CD8-positive, alpha-beta memory T cell (primary cell): ENCODE measurements at regions of chr6 and their contacts with region 1.

Region 1: GRCh38 chr6:120055071-120055470 is 705.5 kb upstream of the MAN1A1 start:
- DNase-seq: no peak
- H3K4me3 ChIP-seq: no peak overlapping the region
- H3K4me3 Mint-ChIP-seq: no peak overlapping the region
- H3K27ac ChIP-seq: no peak overlapping the region
- H3K27ac Mint-ChIP-seq: no peak overlapping the region
- H3K4me1 ChIP-seq: no peaks in the 10 kb centered on the region
- H3K4me1 Mint-ChIP-seq: no peaks in the 10 kb centered on the region
- H3K27me3 ChIP-seq: no peaks in the 10 kb centered on the region
- H3K27me3 Mint-ChIP-seq: peaks cover 0 to 3% of the 10 kb centered on the region in 2 donors

Region 2: DNA sequence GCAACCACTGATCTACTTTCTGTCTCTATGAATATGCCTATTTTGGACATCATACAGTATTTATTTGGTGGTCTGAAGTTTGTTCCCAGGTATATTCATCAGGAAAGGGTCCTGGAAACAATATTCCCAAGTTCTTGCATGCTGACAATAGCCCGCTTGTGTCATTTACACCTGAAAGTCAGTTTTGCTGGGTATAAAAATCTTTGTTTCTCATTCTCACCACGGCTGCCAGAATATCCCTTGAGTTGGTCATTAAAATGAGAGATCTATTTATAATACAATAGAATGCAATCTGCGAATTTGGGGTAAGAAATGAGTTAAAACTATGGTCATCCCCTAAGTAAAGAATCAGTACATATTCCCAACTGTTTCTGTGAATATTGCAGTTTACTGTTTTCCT is 784.5 kb before region 1 on chr6:
- CTCF ChIA-PET with region 1: no interaction called
- POLR2A ChIA-PET with region 1: interaction called, 10 read pairs
- DNase-seq: no peak
- H3K4me3 ChIP-seq: no peak overlapping the region
- H3K4me3 Mint-ChIP-seq: peak overlapping the region in 1 of 7 donors; percentile 14
- H3K27ac ChIP-seq: no peak overlapping the region
- H3K27ac Mint-ChIP-seq: peak overlapping the region in 1 of 8 donors; percentile 21
- H3K4me1 ChIP-seq: peaks cover 13% of the 10 kb centered on the region
- H3K4me1 Mint-ChIP-seq: peaks cover 27 to 37% (median 32%) of the 10 kb centered on the region in 3 donors
- H3K27me3 ChIP-seq: no peaks in the 10 kb centered on the region
- H3K27me3 Mint-ChIP-seq: no peaks in the 10 kb centered on the region